Colonic mucosa (tissue), 4 donors: ENCODE measurements at regions of chr1 and their contacts with region 1.

Region 1: GRCh38 chr1:15028102-15028501 is 125.4 kb upstream of the TMEM51 start:
- DNase-seq: no peak
- H3K4me3 ChIP-seq: no peak overlapping the region
- H3K27ac ChIP-seq: no peak overlapping the region
- H3K4me1 ChIP-seq: peaks cover 5% of the 10 kb centered on the region
- H3K27me3 ChIP-seq: no peaks in the 10 kb centered on the region
- CTCF ChIP-seq: no peak

Region 2: GRCh38 chr1:14113841-14114567 is 914.1 kb before region 1 on chr1:
- intact Hi-C with region 1: loop called (anchors 10 kb)
- DNase-seq: peak; percentile 35
- H3K4me3 ChIP-seq: no peak overlapping the region
- H3K27ac ChIP-seq: no peak overlapping the region
- H3K4me1 ChIP-seq: no peaks in the 10 kb centered on the region
- H3K27me3 ChIP-seq: no peaks in the 10 kb centered on the region
- CTCF ChIP-seq: no peak

Region 3: GRCh38 chr1:14778898-14779865 is 248.9 kb before region 1 on chr1:
- intact Hi-C with region 1: loop called (anchors 5 kb)
- DNase-seq: peak; percentile 48
- H3K4me3 ChIP-seq: no peak overlapping the region
- H3K27ac ChIP-seq: no peak overlapping the region
- H3K4me1 ChIP-seq: no peaks in the 10 kb centered on the region
- H3K27me3 ChIP-seq: no peaks in the 10 kb centered on the region
- CTCF ChIP-seq: peak; percentile 64

Region 4: GRCh38 chr1:14915356-14916054 is 112.6 kb before region 1 on chr1:
- intact Hi-C with region 1: loop called (anchors 5 kb)
- DNase-seq: peak; percentile 62
- H3K4me3 ChIP-seq: no peak overlapping the region
- H3K27ac ChIP-seq: no peak overlapping the region
- H3K4me1 ChIP-seq: no peaks in the 10 kb centered on the region
- H3K27me3 ChIP-seq: no peaks in the 10 kb centered on the region
- CTCF ChIP-seq: peak; percentile 85

Region 5: DNA sequence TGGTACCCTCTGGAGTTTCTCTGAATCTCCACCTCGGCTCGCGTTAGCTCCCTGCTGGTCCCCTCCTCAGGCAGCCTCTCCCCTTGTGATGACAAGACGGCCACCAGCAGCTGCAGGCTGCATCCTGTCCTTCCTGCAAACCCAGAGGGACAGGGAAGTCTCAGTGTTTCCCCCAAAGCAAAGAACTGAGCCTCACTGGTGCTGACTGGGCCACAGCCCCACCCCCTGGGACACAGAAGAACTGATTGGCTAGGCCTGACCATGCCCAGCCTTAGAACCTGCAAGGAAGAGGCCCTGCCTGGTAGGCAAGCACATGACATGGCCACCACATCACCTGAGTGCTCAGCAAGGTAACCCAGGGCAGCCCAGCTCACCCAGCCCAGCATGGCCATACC is 160.0 kb after region 1 on chr1:
- intact Hi-C with region 1: no loop called
- DNase-seq: no peak
- H3K4me3 ChIP-seq: no peak overlapping the region
- H3K27ac ChIP-seq: no peak overlapping the region
- H3K4me1 ChIP-seq: peaks cover 19% of the 10 kb centered on the region
- H3K27me3 ChIP-seq: no peaks in the 10 kb centered on the region
- CTCF ChIP-seq: no peak